ENCODE measurements at regions of chr2 and their contacts with region 1.

Region 1: DNA sequence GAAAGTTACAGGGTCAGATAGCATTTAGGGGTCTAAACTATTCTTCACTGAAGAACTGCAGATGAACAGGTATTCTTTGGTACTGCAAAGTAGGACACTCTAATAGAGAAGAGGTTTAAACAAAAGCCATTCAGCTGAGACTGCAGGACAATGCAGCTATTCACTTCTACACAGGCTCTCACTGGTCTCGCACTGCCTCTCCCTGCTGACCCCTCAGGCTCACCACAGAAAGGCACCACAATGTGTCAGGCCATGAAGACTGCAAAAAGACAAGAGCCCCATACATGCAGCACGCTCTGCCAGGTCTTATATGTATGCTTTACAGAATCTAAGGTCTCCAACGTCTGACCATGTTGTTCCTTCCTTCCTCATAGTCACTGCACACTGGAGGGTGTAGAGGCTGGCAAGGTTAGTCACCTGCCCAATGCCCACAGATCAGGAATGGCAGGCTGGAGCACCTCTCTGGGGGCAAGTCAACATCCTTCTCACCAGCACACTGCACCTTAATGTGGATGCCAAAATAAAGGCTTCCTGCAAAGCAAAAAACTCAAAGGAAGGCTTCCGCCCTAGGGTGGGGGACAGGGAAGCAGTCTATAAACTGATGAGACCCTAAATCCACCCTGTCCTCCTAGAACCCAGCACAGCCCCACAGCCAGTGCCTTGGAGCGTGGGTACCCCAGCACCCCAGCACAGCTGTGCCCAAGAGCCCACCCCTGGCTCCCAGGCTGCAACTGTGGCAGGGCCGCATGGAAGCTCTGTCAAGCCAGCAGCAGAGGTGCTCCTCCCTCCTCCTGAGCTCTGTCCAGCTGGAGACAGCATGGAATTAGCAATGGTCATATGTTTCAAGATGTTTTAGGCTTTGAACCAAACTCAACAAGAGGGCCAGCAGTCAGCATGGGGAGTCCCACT is 10.7 kb upstream of the RNU4ATAC start:
- DNase-seq: no peak
- ATAC-seq: peak; percentile 23 to 49 (median 42)
- H3K4me3 ChIP-seq: no peak overlapping the region
- H3K27ac ChIP-seq: no peak overlapping the region
- H3K4me1 ChIP-seq: peaks cover 0 to 26% (median 7%) of the 10 kb centered on the region in 12 donors
- H3K27me3 ChIP-seq: no peaks in the 10 kb centered on the region
- CTCF ChIP-seq: no peak
- POLR2A ChIP-seq: no peak

Region 2: DNA sequence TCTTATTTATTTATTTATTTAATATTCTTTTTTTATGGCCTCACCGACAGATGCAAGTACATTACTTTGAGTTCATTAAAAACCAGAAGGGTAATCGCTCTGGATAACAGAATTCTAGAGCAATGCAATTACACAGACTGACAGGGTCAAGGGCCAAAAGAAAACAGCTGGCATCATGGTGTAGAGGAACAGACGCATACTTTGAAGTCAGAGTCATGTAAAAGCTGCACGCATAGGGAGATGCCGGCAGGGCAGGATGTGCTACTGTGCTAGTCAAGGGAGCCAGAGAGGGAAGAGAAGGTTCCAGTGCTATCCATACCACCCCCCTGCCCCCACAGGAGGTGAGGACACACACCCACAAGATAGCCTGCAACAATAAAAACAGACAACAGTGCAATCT is 119.8 kb before region 1 on chr2:
- intact Hi-C with region 1: loop called in 2 of 10 experiments (anchors 5 kb)
- DNase-seq: no peak
- ATAC-seq: no peak
- H3K4me3 ChIP-seq: no peak overlapping the region
- H3K27ac ChIP-seq: no peak overlapping the region
- H3K4me1 ChIP-seq: no peaks in the 10 kb centered on the region
- H3K27me3 ChIP-seq: no peaks in the 10 kb centered on the region
- CTCF ChIP-seq: no peak
- POLR2A ChIP-seq: no peak

Region 3: GRCh38 chr2:121408641-121409040 is 111.3 kb before region 1 on chr2:
- intact Hi-C with region 1: loop called in 2 of 10 experiments (anchors 5 kb)
- DNase-seq: no peak
- ATAC-seq: no peak
- H3K4me3 ChIP-seq: no peak overlapping the region
- H3K27ac ChIP-seq: no peak overlapping the region
- H3K4me1 ChIP-seq: no peaks in the 10 kb centered on the region
- H3K27me3 ChIP-seq: no peaks in the 10 kb centered on the region
- CTCF ChIP-seq: no peak
- POLR2A ChIP-seq: no peak